Stomach (tissue), 19 donors: ENCODE measurements at regions of chr6 and their contacts with region 1.

Region 1: GRCh38 chr6:116268589-116269293 is 11.0 kb downstream of the TSPYL1 start:
- DNase-seq: peak in 1 of 2 donors; percentile 85
- H3K4me3 ChIP-seq: no peak overlapping the region
- H3K27ac ChIP-seq: no peak overlapping the region
- H3K4me1 ChIP-seq: peaks cover 0 to 21% (median 13%) of the 10 kb centered on the region in 4 donors
- H3K27me3 ChIP-seq: no peaks in the 10 kb centered on the region
- CTCF ChIP-seq: peak in 5 of 7 experiments; percentile 63 to 76 (median 71)
- EP300 ChIP-seq: no peak
- POLR2A ChIP-seq: no peak

Region 2: DNA sequence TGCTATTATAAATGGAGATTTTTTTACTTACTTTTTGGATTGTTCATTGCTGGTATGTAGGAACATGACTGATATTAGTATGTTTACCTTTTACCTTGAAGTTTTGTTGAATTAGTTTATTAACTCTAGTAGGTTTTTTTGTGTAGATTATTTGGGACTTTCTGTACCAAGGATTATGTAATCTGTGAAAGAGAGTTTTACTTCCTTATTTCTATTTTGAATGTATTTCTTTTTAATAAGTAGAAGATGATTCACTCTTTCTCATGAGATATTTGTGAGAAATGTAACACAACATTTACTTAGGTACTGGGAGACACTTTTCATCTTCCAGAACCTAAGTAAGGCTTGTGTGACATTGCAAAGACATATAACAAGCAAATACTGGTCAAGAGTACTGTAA is 1452.1 kb before region 1 on chr6:
- intact Hi-C with region 1: no loop called
- DNase-seq: no peak
- H3K4me3 ChIP-seq: no peak overlapping the region
- H3K27ac ChIP-seq: no peak overlapping the region
- H3K4me1 ChIP-seq: no peaks in the 10 kb centered on the region
- H3K27me3 ChIP-seq: no peaks in the 10 kb centered on the region
- CTCF ChIP-seq: no peak
- EP300 ChIP-seq: no peak
- POLR2A ChIP-seq: no peak

Region 3: GRCh38 chr6:116531675-116532570 is 263.2 kb after region 1 on chr6:
- intact Hi-C with region 1: loop called (anchors 10 kb)
- DNase-seq: peak; percentile 56 to 84
- H3K4me3 ChIP-seq: no peak overlapping the region
- H3K27ac ChIP-seq: no peak overlapping the region
- H3K4me1 ChIP-seq: peaks cover 0 to 4% (median 0%) of the 10 kb centered on the region in 4 donors
- H3K27me3 ChIP-seq: peaks cover 0 to 3% (median 0%) of the 10 kb centered on the region in 3 donors
- CTCF ChIP-seq: peak in 5 of 7 experiments; percentile 39 to 76 (median 71)
- EP300 ChIP-seq: no peak
- POLR2A ChIP-seq: no peak